Heart right ventricle (tissue), 16 donors: ENCODE measurements at regions of chr7 and their contacts with region 1.

Region 1: GRCh38 chr7:36280840-36281812 is 108.5 kb upstream of the ANLN start:
- DNase-seq: peak; percentile 61 to 68
- ATAC-seq: peak; percentile 69 to 92 (median 80)
- H3K4me3 ChIP-seq: peak overlapping the region in 3 of 10 donors; percentile 12 to 28 (median 17)
- H3K27ac ChIP-seq: peak overlapping the region in 8 of 10 donors; percentile 22 to 90 (median 62)
- H3K4me1 ChIP-seq: peaks cover 2 to 96% (median 74%) of the 10 kb centered on the region in 9 donors
- H3K27me3 ChIP-seq: no peaks in the 10 kb centered on the region
- CTCF ChIP-seq: peak in 2 of 9 donors; percentile 5 to 13

Region 2: DNA sequence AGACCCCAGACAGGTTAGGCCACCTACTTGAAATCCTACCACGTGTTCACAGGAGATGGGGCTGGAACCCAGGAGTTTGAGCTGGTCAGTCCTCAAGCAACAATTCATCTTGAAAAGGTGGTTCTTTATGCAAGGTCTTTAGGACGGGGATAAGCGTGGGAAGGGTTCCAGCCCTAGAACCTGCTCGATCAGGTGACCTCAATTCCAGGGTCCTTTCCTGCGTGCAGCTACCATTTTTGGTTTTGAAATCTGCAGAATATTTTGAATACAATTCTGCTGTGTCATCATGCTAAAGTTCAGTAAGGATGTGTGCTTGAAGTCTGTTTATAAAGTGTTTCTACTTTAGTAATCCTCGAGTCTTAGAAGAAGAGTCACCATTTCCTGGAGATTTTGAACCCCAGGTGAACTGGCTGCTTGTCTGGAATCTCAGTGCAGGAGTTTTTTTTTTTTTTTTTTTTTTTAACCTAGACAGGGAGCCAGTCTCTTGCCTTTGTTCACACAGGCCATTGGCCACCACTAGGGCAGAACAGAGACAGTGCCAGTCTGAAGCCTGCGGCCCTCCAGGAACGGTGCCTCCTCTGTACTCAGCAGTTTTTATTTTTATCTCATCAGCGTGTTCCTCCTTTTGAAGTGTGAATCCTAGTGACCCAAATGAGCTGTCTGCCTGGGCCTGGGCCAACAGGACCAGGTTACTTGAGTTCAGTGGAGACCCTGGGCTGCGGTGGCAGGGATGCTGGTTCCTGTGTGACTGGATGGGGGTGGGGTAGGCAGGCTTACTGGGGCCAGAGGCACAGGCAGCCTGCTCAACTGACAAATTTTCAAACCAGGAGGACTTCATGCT is 73.5 kb before region 1 on chr7:
- intact Hi-C with region 1: loop called in 4 of 10 experiments (anchors 5 to 10 kb)
- DNase-seq: peak; percentile 50 to 57
- ATAC-seq: peak; percentile 45 to 87 (median 78)
- H3K4me3 ChIP-seq: no peak overlapping the region
- H3K27ac ChIP-seq: peak overlapping the region in 3 of 10 donors; percentile 41 to 71 (median 44)
- H3K4me1 ChIP-seq: peaks cover 2 to 81% (median 65%) of the 10 kb centered on the region in 9 donors
- H3K27me3 ChIP-seq: no peaks in the 10 kb centered on the region
- CTCF ChIP-seq: peak in 3 of 9 donors; percentile 14 to 21 (median 20)

Region 3: GRCh38 chr7:36227223-36227622 is 53.9 kb before region 1 on chr7:
- intact Hi-C with region 1: loop called in 2 of 10 experiments (anchors 5 to 10 kb)
- DNase-seq: peak in 1 of 2 donors; percentile 34
- ATAC-seq: peak in 6 of 8 donors; percentile 27 to 74 (median 72)
- H3K4me3 ChIP-seq: no peak overlapping the region
- H3K27ac ChIP-seq: peak overlapping the region in 2 of 10 donors; percentile 48 to 57
- H3K4me1 ChIP-seq: peaks cover 4 to 48% (median 22%) of the 10 kb centered on the region in 9 donors
- H3K27me3 ChIP-seq: no peaks in the 10 kb centered on the region
- CTCF ChIP-seq: no peak

Region 4: DNA sequence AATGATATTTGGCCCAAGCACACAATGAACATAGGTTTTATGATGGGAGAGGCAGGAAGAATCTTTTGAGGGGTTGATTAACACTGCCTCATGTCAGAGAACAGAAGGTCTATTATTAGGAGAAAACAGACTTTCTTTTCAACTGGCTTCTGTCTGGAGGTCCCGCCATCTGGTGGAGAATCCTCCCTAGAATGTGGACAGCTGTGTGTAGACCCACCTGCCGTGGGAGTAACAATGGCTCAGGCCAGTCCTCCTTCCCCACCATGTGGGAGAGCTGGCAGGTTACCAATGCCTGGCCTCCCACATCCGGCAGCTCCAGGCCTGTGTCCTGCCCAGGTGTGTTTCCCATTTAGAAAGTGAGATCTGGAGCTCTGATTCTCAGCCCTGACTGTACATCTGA is 513.6 kb after region 1 on chr7:
- intact Hi-C with region 1: no loop called
- DNase-seq: no peak
- ATAC-seq: peak in 3 of 8 donors; percentile 28 to 50 (median 44)
- H3K4me3 ChIP-seq: no peak overlapping the region
- H3K27ac ChIP-seq: no peak overlapping the region
- H3K4me1 ChIP-seq: peaks cover 0 to 9% (median 0%) of the 10 kb centered on the region in 9 donors
- H3K27me3 ChIP-seq: no peaks in the 10 kb centered on the region
- CTCF ChIP-seq: peak in 1 of 9 donors; percentile 22